Motor neuron (in vitro differentiated cells): ENCODE measurements at regions of chr5 and their contacts with region 1.

Region 1: GRCh38 chr5:135829681-135830383 is 4.6 kb upstream of the SLC25A48 start:
- ATAC-seq: peak; percentile 57 to 69 (median 62)
- H3K4me3 ChIP-seq: no peak overlapping the region
- H3K27ac ChIP-seq: no peak overlapping the region
- H3K4me1 ChIP-seq: no peaks in the 10 kb centered on the region

Region 2: DNA sequence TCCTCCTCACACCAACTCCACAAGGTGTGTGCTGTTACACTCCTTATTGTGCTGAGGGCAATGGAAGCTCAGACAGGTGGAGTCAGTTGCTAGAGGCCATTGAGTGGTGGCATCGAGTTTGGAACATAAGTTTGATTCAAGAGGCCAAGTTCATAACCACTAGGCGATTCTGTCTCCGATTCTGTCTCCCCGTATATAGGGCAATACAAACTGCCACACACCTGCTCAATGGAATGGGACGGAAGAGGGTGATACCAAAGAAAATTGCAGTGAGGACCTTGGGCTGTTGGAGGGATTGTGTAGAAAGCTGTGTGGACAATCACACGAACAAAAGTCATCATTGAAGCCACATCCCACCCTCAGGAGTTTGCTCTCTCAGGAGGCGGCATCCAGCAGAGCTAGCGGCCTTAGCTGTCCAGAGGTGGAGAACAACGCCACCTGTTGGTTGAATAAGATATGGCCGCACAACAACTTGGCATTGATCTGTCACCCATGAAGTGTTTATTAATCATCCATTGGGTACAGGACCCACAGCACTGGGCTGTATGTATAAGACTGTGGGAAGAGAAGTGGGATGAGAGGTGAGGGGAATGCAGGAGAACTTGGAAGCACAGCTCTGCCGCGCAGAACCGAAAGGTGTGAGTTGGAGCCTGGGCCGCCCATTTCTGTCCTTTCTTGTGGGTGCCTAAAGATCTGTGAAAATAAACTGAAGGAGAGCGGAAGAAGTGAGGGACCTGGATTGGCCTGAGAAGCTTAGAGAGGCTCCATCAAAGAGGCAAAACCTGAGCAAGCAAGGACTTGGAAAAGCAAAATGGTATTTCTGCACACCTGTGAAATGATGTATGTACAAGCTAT is 278.0 kb before region 1 on chr5:
- in situ Hi-C with region 1: loop called in 8 of 9 experiments (anchors 5 to 25 kb)
- ATAC-seq: peak; percentile 80 to 93 (median 88)
- H3K4me3 ChIP-seq: no peak overlapping the region
- H3K27ac ChIP-seq: no peak overlapping the region
- H3K4me1 ChIP-seq: peaks cover 3 to 5% of the 10 kb centered on the region in 2 donors

Region 3: DNA sequence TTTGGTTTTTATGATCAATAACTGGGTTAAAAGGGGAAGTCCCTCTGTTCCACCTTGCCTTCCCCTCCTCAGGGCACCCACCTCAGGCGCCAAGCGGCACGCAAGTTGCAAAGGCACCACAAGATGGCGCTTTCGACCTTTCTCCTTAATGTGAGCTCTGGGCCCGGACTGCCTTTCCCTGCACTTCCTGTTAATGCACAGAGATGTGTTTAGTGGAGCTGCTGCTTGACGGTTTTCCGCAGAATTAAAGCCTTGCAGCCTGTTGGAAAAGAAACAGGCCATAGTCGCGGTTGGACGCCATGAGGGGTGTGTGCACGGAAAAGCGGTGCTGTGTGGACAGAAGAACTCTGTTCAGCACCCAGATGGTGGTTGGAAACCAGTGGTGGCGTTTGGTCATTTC is 269.0 kb before region 1 on chr5:
- in situ Hi-C with region 1: loop called (anchors 5 to 25 kb)
- ATAC-seq: peak; percentile 82 to 99 (median 92)
- H3K4me3 ChIP-seq: no peak overlapping the region
- H3K27ac ChIP-seq: no peak overlapping the region
- H3K4me1 ChIP-seq: peaks cover 15 to 17% of the 10 kb centered on the region in 2 donors

Region 4: GRCh38 chr5:135930029-135930948 is 100.5 kb after region 1 on chr5:
- in situ Hi-C with region 1: no loop called
- ATAC-seq: peak in 4 of 8 experiments; percentile 17 to 74 (median 32)
- H3K4me3 ChIP-seq: peak overlapping the region in 4 of 5 donors; percentile 14 to 24 (median 20)
- H3K27ac ChIP-seq: no peak overlapping the region
- H3K4me1 ChIP-seq: no peaks in the 10 kb centered on the region